Colonic mucosa (tissue), 4 donors: ENCODE measurements at regions of chr1 and their contacts with region 1.

Region 1: DNA sequence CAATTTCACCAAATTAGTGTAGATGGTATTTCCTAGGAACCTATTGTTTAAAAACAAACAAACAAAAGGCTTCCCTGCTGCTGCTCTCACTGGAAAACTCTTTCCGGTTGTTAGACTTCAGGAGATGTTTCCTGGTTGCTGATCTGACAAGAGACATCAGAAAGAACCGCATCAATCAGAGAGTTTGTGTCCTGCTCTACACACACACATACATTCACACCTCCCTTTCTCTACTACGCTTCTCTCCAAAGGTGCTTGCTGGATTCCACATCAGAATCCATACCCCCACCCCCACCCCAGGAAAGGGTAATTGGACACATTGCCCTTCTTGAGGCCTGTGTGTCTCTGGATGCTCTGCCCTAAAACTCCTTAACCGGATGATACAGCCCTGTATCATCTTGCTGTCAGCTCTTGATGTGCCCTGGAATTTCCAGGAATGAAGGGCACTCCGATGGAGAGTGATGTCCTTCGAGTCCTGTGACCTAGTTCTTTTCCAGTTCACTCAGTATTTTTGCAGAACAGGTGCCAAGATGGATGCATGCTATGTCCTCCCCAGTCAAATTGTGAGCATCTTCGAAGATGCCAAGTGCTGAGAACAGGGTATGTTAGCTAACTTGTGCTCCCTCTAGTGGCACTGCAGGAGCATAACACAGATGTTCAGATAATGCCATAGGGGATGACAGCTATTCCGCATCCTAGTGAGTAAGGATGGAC is 113.7 kb upstream of the SLC35F3 start:
- DNase-seq: peak; percentile 21
- H3K4me3 ChIP-seq: no peak overlapping the region
- H3K27ac ChIP-seq: no peak overlapping the region
- H3K4me1 ChIP-seq: no peaks in the 10 kb centered on the region
- H3K27me3 ChIP-seq: no peaks in the 10 kb centered on the region
- CTCF ChIP-seq: peak; percentile 79

Region 2: GRCh38 chr1:233440951-233441401 is 349.8 kb before region 1 on chr1:
- intact Hi-C with region 1: loop called (anchors 2 kb)
- DNase-seq: peak; percentile 25
- H3K4me3 ChIP-seq: no peak overlapping the region
- H3K27ac ChIP-seq: no peak overlapping the region
- H3K4me1 ChIP-seq: no peaks in the 10 kb centered on the region
- H3K27me3 ChIP-seq: no peaks in the 10 kb centered on the region
- CTCF ChIP-seq: peak; percentile 51

Region 3: GRCh38 chr1:233518349-233518748 is 272.5 kb before region 1 on chr1:
- intact Hi-C with region 1: loop called (anchors 10 kb)
- DNase-seq: peak; percentile 68
- H3K4me3 ChIP-seq: no peak overlapping the region
- H3K27ac ChIP-seq: no peak overlapping the region
- H3K4me1 ChIP-seq: no peaks in the 10 kb centered on the region
- H3K27me3 ChIP-seq: no peaks in the 10 kb centered on the region
- CTCF ChIP-seq: peak; percentile 38